AG04450 (cell line): ENCODE measurements at regions of chr6 and their contacts with region 1.

Region 1: GRCh38 chr6:110958329-110959192 is at the start of gene GTF3C6:
- DNase-seq: peak; percentile 81
- H3K4me3 ChIP-seq: peak within 1 kb of the TSS; percentile 92
- H3K27ac ChIP-seq: peak within 1 kb of the TSS; percentile 93
- H3K27me3 ChIP-seq: no peaks in the 10 kb centered on the region
- CTCF ChIP-seq: no peak
- polyA plus RNA-seq, gene GTF3C6: 49.2 and 65.7 TPM in 2 replicates

Region 2: DNA sequence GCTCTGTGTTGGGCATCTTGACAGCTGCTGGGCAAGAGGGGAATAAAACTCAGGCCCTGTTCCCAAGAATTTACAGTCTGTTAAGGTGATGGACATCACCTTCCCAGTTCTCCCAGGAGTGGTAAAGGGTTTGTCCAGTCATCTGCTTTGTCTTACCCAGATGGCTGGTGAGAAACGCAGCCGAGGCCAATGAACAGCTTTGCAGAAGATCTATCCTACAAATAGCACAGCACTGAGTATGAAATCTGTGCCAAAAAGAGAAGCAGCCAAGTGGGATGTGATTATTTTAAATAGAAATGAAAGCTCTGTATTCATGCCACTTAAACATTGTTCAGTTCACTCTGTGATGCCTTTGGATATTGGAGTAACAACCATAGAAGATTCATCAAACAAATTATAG is 349.5 kb before region 1 on chr6:
- CTCF ChIA-PET with region 1: no interaction called
- POLR2A ChIA-PET with region 1: no interaction called
- DNase-seq: no peak
- H3K4me3 ChIP-seq: no peak overlapping the region
- H3K27ac ChIP-seq: no peak overlapping the region
- H3K27me3 ChIP-seq: no peaks in the 10 kb centered on the region
- CTCF ChIP-seq: no peak

Region 3: GRCh38 chr6:110815217-110816109 is 143.1 kb before region 1 on chr6 and contains the start of gene CDK19:
- CTCF ChIA-PET with region 1: interaction called, 3 read pairs
- POLR2A ChIA-PET with region 1: interaction called, 10 read pairs
- DNase-seq: peak; percentile 92
- H3K4me3 ChIP-seq: peak within 1 kb of the TSS; percentile 94
- H3K27ac ChIP-seq: peak within 1 kb of the TSS; percentile 99
- H3K27me3 ChIP-seq: no peaks in the 10 kb centered on the region
- CTCF ChIP-seq: no peak
- polyA plus RNA-seq, gene CDK19: 15.1 and 21.4 TPM in 2 replicates

Region 4: DNA sequence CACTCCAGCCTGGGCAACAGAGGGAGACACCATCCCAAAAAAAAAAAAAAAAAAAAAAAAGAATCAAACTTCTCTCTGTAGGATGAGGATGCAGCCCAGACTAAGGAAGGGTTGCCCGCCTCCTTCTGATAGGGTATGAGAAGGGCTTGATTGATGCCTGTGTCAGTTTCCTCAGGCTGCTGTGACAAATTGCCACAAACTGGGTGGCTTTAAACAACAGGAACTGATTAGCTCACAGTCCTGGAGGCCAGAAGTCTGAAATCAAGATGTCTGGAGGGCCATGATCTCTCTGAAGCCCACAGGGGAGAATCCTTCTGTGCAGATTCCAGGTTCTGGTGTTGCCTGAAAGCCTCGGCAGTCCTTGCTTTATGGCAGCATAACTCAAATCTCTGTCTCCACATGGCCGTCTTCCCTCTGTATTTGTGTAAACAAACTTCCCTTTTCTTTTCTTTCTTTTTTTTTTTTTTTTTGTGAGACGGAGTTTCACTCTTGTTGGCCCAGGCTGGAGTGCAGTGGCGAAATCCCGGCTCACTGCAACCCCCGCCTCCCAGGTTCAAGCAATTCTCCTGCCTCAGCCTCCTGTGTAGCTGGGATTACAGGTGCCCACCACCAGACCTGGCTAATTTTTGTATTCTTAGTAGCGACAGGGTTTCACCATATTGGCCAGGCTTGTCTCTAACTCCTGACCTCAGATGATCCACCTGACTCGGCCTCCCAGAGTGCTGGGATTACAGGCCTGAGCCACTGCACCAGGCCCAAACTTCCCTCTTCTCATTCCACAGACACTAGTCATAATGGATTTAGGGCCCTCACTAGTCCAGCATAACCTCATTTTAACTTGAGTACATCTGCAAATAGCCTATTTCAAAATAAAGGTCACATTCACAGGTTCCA is 132.1 kb before region 1 on chr6:
- CTCF ChIA-PET with region 1: no interaction called
- POLR2A ChIA-PET with region 1: no interaction called
- DNase-seq: no peak
- H3K4me3 ChIP-seq: no peak overlapping the region
- H3K27ac ChIP-seq: no peak overlapping the region
- H3K27me3 ChIP-seq: no peaks in the 10 kb centered on the region
- CTCF ChIP-seq: no peak

Region 5: GRCh38 chr6:110971468-110971867 is 12.9 kb after region 1 on chr6:
- CTCF ChIA-PET with region 1: interaction called, 12 read pairs
- POLR2A ChIA-PET with region 1: no interaction called
- DNase-seq: no peak
- H3K4me3 ChIP-seq: no peak overlapping the region
- H3K27ac ChIP-seq: no peak overlapping the region
- H3K27me3 ChIP-seq: no peaks in the 10 kb centered on the region
- CTCF ChIP-seq: no peak